ENCODE measurements at regions of chr10 and their contacts with region 1.

Region 1: GRCh38 chr10:69800109-69800508 is 1.6 kb upstream of the COL13A1 start:
- DNase-seq: no peak
- ATAC-seq: peak; percentile 53

Region 2: DNA sequence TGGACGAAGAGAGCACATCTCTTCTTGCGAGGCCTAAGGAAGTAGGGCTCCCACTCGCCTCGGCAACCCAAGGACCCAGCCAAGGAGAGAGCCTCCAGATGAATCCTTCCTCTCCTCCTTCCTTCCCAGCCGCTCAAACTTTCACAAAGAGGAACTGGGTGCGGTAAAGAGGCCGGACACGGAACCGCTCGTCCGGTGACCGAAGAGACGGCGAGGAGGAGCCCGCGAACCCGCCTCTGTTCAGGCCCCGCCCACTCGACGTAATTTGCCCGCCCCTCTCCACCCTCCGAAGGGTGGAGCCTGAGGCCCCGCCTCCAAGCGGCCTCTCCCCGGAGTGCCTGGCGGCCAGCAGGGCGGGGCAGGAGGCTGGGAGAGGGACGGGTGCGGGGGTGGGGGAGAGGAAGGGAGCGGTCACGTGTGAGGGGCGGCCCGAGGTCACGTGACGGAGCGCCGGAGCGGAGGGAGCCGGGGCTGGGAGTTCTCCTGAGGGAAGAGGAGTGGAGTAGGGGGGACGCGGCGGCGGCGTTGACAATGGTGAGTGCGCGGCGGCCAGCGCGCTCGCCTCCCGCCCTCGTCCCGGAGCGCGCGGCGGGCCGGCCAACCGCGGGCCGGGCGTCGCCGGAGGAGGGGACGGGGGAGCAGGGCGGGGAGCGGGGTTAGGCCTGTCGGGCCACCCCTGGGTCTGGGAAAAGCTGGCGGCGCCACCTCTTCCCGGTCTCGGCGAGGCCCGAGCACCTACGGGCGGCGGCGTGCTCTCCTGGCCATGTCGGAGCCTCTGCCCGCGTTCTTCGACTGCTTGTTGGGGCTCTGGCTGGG is 676.2 kb before region 1 on chr10 and contains the start of gene VPS26A:
- intact Hi-C with region 1: no loop called
- DNase-seq: peak; percentile 99
- ATAC-seq: peak; percentile 100
- total RNA-seq, gene VPS26A: 32.5 TPM

Region 3: GRCh38 chr10:69639291-69640195 is 160.6 kb before region 1 on chr10:
- intact Hi-C with region 1: loop called (anchors 5 kb)
- DNase-seq: no peak
- ATAC-seq: no peak

Region 4: DNA sequence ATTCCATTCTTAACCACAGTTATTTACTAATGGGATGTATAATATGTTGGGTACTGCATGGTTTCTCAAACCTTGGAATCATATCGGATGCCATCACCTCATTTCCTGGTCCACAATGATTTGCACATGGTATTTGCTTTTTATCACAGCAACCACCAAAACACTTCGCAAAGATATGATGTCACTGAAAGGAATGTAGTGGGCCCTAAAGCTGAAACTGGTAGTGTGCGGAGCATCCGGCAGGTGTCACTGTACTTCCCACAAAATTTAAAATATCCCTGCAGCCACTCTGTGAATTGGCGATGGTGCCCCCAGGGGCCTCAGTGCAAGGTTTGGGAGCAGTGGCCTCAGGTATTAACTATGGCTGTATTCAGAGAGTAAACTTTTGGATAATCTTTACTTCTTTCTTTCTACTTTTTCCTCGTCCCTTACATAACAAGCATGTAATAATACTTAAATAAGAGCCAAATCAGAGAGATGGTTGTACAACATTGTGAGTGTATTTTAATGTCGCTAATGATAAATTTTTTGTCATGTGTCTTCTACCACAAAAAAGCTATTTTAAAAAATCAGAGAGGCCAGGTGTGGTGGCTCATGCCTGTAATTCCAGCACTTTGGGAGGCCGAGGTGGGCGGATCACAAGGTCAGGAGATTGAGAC is 103.9 kb before region 1 on chr10:
- intact Hi-C with region 1: loop called (anchors 2 kb)
- DNase-seq: no peak
- ATAC-seq: no peak

Region 5: GRCh38 chr10:69733791-69734261 is 66.3 kb before region 1 on chr10:
- intact Hi-C with region 1: loop called (anchors 2 kb)
- DNase-seq: no peak
- ATAC-seq: no peak

Region 6: GRCh38 chr10:69914398-69915214 is 114.5 kb after region 1 on chr10:
- intact Hi-C with region 1: loop called (anchors 5 kb)
- DNase-seq: peak; percentile 83
- ATAC-seq: peak; percentile 60